ENCODE measurements at regions of chr6 and their contacts with region 1.

Region 1: GRCh38 chr6:117346142-117346930 is 79.4 kb downstream of the ROS1 start:
- DNase-seq: no peak
- ATAC-seq: 0 out of 2 replicates have a peak, but pooled peaks have one; percentile 36
- H3K4me3 ChIP-seq: no peak overlapping the region
- H3K27ac ChIP-seq: no peak overlapping the region
- H3K4me1 ChIP-seq: no peaks in the 10 kb centered on the region
- H3K27me3 ChIP-seq: no peaks in the 10 kb centered on the region
- CTCF ChIP-seq: peak; percentile 27 to 57 (median 53); a peak in 4 of 6 replicates
- POLR2A ChIP-seq: no peak
- RAD21 ChIP-seq: peak; percentile 71

Region 2: DNA sequence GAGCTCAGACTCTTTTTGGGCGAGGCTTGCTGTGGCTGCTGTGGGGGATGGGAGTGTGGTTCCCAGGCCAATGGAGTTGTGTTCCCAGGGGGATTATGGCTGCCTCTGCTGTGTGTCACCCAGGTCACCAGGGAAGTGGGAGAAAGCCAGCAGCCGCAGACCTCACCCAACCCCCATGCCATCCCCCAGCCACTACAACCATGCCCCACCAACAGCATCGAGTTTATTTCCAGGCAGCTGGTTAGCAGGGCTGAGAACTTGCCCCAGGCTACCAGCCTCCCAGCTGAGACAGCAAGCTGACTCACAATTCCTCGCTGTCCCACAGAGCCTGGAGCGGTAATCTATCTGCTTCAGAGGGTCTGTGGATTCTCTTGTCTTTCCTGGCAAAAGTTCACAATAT is 1617.3 kb before region 1 on chr6:
- CTCF ChIA-PET with region 1: no interaction called
- POLR2A ChIA-PET with region 1: no interaction called
- RAD21 ChIA-PET with region 1: no interaction called
- intact Hi-C with region 1: no loop called
- DNase-seq: no peak
- ATAC-seq: no peak
- H3K4me3 ChIP-seq: no peak overlapping the region
- H3K27ac ChIP-seq: no peak overlapping the region
- H3K4me1 ChIP-seq: no peaks in the 10 kb centered on the region
- H3K27me3 ChIP-seq: 0 out of 2 replicates have a peak, but pooled peaks cover 12% of the 10 kb centered on the region
- CTCF ChIP-seq: no peak
- POLR2A ChIP-seq: no peak
- RAD21 ChIP-seq: no peak

Region 3: GRCh38 chr6:117399924-117400323 is 53.6 kb after region 1 on chr6:
- CTCF ChIA-PET with region 1: no interaction called
- POLR2A ChIA-PET with region 1: no interaction called
- RAD21 ChIA-PET with region 1: no interaction called
- intact Hi-C with region 1: no loop called
- DNase-seq: no peak
- ATAC-seq: peak; percentile 87
- H3K4me3 ChIP-seq: no peak overlapping the region
- H3K27ac ChIP-seq: no peak overlapping the region
- H3K4me1 ChIP-seq: no peaks in the 10 kb centered on the region
- H3K27me3 ChIP-seq: no peaks in the 10 kb centered on the region
- CTCF ChIP-seq: peak; percentile 23 to 44 (median 38); a peak in 4 of 6 replicates
- POLR2A ChIP-seq: no peak
- RAD21 ChIP-seq: no peak; the same call in 1 of the 2 replicates

Region 4: DNA sequence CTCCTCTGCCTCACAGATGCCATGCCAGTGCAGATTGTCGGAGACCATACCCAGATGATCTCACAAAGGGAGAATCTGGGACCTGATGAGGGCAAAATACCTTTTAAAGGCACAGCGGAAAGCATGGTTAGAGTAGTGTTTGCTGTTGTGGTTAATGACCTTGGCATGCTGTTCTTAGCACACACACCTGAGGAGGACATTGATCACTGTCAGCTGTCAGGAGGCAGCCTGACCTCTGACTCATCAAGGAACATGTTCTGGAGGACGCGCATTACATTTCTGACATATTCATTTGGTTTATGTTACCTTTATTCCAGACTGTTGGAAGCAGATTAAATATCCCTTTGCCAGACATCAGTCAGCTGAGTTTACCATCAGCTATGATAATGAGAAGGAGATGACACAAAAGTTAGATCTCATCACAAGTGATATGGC is 198.8 kb after region 1 on chr6:
- CTCF ChIA-PET with region 1: no interaction called
- POLR2A ChIA-PET with region 1: no interaction called
- RAD21 ChIA-PET with region 1: no interaction called
- intact Hi-C with region 1: no loop called
- DNase-seq: no peak
- ATAC-seq: peak; percentile 47; the same call in 1 of the 2 replicates
- H3K4me3 ChIP-seq: no peak overlapping the region
- H3K27ac ChIP-seq: no peak overlapping the region
- H3K4me1 ChIP-seq: peaks cover 20 to 22% of the 10 kb centered on the region in 2 experiments
- H3K27me3 ChIP-seq: no peaks in the 10 kb centered on the region
- CTCF ChIP-seq: no peak
- POLR2A ChIP-seq: no peak
- RAD21 ChIP-seq: no peak

Region 5: DNA sequence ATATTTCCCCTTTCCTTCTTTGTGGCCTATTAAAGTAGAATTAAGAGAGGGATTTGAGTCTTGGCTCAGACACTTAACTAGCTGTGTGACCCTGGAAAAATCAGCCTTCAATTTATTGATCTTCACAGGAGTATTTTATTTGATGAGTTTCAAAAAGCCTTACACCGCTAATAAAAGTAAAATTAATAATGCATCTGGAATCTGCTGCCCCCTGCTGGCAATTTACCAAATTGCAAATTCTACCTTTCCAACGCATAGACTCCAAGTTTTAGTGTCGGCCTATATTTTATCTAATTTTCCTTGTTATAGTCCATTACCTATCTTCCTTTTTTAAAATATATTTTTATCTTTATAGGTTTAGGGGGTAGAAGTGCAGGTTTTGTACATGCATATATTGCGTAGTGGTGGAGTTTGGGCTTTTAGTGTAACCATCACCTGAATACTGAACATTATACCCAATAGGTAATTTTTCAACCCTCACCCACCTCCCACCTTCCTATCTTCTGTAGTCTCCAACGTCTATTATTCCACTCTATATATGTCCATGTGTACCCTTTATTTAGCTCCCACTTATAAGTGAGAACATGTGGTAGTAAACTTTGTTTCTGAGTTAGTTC is 209.7 kb after region 1 on chr6:
- CTCF ChIA-PET with region 1: no interaction called
- POLR2A ChIA-PET with region 1: no interaction called
- RAD21 ChIA-PET with region 1: no interaction called
- intact Hi-C with region 1: loop called (anchors 2 kb)
- DNase-seq: no peak
- ATAC-seq: peak; percentile 58
- H3K4me3 ChIP-seq: no peak overlapping the region
- H3K27ac ChIP-seq: no peak overlapping the region
- H3K4me1 ChIP-seq: peaks cover under 1 to 7% of the 10 kb centered on the region in 2 experiments; a peak in 2 of 4 replicates
- H3K27me3 ChIP-seq: no peaks in the 10 kb centered on the region
- CTCF ChIP-seq: peak; percentile 61 to 87 (median 77); a peak in 5 of 6 replicates
- POLR2A ChIP-seq: no peak
- RAD21 ChIP-seq: peak; percentile 83

Region 6: GRCh38 chr6:117602151-117602898 is 256.0 kb after region 1 on chr6 and contains the start of gene GOPC:
- CTCF ChIA-PET with region 1: interaction called, 3 read pairs
- POLR2A ChIA-PET with region 1: no interaction called
- RAD21 ChIA-PET with region 1: no interaction called
- intact Hi-C with region 1: loop called (anchors 1 kb)
- DNase-seq: peak; percentile 95
- ATAC-seq: peak; percentile 90
- H3K4me3 ChIP-seq: peak within 1 kb of the TSS; percentile 88 to 89
- H3K27ac ChIP-seq: peak within 1 kb of the TSS; percentile 86
- H3K4me1 ChIP-seq: peaks cover 9 to 18% of the 10 kb centered on the region in 2 experiments
- H3K27me3 ChIP-seq: no peaks in the 10 kb centered on the region
- CTCF ChIP-seq: 0 out of 6 replicates have a peak, but pooled peaks of 1 of the 3 experiments have one; percentile 12
- POLR2A ChIP-seq: peak; percentile 77
- RAD21 ChIP-seq: no peak
- total RNA-seq, gene GOPC: 24.2 TPM

Region 7: DNA sequence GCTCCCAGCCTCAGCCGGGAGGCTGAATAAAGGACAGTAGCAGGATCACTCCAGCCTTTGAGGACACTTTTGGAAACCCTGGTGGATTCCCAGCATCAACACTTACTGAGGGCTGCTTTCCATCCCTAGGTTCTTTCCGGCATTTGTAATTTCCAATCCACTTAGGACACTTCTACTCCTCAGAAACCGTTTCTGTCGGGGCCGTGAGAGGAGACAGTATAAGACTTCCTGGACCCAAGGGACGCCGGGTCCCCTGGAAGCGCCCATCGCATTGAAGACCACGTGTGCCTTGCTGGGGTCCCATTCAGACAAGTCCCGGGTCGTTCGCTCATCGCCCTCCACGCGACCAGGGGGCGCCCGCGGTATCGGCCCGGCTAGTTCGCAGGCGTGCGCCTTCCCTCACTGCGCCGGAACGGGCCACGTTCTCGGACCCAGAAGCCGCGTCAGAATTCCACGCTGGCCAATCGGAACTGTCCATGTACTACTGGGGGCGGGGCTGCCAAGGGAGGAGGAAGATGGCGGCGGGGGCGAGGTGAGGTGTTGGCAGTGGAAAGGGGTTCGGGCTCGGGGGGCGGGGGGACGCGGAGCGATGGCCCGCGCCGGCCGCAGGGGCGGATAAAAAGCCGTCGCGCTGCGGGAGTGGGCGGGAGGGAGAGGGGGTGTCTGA is 328.8 kb after region 1 on chr6 and contains the start of gene NUS1:
- CTCF ChIA-PET with region 1: no interaction called
- POLR2A ChIA-PET with region 1: no interaction called
- RAD21 ChIA-PET with region 1: no interaction called
- intact Hi-C with region 1: loop called (anchors 5 kb)
- DNase-seq: peak; percentile 94
- ATAC-seq: peak; percentile 98
- H3K4me3 ChIP-seq: peak within 1 kb of the TSS; percentile 71 to 75
- H3K27ac ChIP-seq: peak within 1 kb of the TSS; percentile 30; the same call in 1 of the 2 replicates
- H3K4me1 ChIP-seq: peaks cover 7 to 22% of the 10 kb centered on the region in 2 experiments; a peak in 3 of 4 replicates
- H3K27me3 ChIP-seq: no peaks in the 10 kb centered on the region
- CTCF ChIP-seq: peak; percentile 57 to 65 (median 57); a peak in 5 of 6 replicates
- POLR2A ChIP-seq: no peak
- RAD21 ChIP-seq: no peak
- total RNA-seq, gene NUS1: 46.2 TPM

Region 8: DNA sequence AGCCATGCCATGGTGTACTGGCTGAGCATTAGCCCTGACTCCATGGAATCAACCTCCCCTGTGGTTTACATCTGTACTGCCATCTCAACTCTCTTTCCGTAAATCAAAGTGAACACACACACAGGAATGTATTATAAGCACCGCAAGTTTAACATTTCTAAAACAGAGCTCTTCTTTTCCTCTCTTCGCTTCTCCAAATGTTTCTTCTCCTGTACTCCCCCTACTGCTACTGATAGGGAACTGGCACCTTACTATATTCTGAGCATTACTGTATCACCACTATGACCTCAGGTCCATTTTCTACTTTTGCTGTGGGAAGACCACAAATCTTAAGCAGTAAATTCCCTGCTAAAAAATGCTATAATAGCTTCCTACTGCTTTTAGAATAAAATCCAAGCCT is 430.1 kb after region 1 on chr6:
- CTCF ChIA-PET with region 1: no interaction called
- POLR2A ChIA-PET with region 1: no interaction called
- RAD21 ChIA-PET with region 1: no interaction called
- intact Hi-C with region 1: no loop called
- DNase-seq: no peak
- ATAC-seq: peak; percentile 80
- H3K4me3 ChIP-seq: no peak overlapping the region
- H3K27ac ChIP-seq: no peak overlapping the region
- H3K4me1 ChIP-seq: no peaks in the 10 kb centered on the region
- H3K27me3 ChIP-seq: no peaks in the 10 kb centered on the region
- CTCF ChIP-seq: peak in 2 of 3 experiments; percentile 38 to 42; a peak in 4 of 6 replicates
- POLR2A ChIP-seq: no peak
- RAD21 ChIP-seq: no peak